ENCODE measurements at regions of chr2 and their contacts with region 1.

Region 1: GRCh38 chr2:230007931-230008707 is 60.6 kb downstream of the SLC16A14 start:
- DNase-seq: peak; percentile 92
- ATAC-seq: peak; percentile 69
- H3K4me3 Mint-ChIP-seq: no peak overlapping the region
- H3K27ac Mint-ChIP-seq: no peak overlapping the region
- H3K4me1 Mint-ChIP-seq: peaks cover 5% of the 10 kb centered on the region
- H3K27me3 Mint-ChIP-seq: no peaks in the 10 kb centered on the region

Region 2: DNA sequence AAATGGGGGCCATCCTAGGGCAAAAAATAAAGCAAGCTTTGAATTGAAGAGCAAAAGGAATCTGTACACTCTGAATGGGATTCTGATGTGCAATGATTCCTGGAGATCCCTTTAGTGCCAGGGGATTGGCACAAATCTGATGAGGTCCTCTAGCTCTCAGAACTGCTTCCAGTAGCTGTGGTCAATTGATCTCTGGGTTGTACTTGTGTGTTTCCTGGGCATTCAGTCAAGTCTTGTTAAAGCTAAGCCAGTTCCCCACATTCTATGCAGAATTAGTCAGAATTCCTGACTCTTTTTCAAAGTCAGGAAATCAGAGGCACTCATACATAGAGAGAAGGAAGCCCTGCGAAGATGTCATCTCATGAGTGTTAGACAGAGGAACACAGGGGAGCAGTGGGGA is 455.0 kb before region 1 on chr2:
- CTCF ChIA-PET with region 1: no interaction called
- POLR2A ChIA-PET with region 1: no interaction called
- intact Hi-C with region 1: no loop called
- DNase-seq: no peak
- ATAC-seq: no peak
- H3K4me3 Mint-ChIP-seq: no peak overlapping the region
- H3K27ac Mint-ChIP-seq: no peak overlapping the region
- H3K4me1 Mint-ChIP-seq: no peaks in the 10 kb centered on the region
- H3K27me3 Mint-ChIP-seq: peaks cover 10% of the 10 kb centered on the region

Region 3: DNA sequence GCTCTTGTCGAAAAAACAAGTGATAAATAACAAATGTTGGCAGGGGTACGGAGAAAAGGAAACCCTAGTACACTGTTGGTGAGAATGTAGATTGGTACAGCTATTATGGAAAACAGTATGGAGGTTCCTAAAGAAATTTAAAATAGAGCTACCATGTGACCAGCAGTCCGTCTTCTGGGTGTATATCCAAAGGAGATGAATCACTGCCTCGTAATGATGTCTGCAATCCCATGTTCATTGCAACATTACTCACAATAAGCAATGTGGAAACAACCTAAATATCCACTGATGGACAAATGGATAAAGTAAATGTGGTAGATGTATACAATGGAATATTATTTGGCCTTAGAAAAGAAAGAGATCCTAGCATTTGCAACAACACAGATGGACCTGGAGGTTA is 10.0 kb after region 1 on chr2:
- CTCF ChIA-PET with region 1: interaction called, 10 read pairs
- POLR2A ChIA-PET with region 1: no interaction called
- intact Hi-C with region 1: no loop called
- DNase-seq: no peak
- ATAC-seq: no peak
- H3K4me3 Mint-ChIP-seq: no peak overlapping the region
- H3K27ac Mint-ChIP-seq: no peak overlapping the region
- H3K4me1 Mint-ChIP-seq: no peaks in the 10 kb centered on the region
- H3K27me3 Mint-ChIP-seq: no peaks in the 10 kb centered on the region

Region 4: DNA sequence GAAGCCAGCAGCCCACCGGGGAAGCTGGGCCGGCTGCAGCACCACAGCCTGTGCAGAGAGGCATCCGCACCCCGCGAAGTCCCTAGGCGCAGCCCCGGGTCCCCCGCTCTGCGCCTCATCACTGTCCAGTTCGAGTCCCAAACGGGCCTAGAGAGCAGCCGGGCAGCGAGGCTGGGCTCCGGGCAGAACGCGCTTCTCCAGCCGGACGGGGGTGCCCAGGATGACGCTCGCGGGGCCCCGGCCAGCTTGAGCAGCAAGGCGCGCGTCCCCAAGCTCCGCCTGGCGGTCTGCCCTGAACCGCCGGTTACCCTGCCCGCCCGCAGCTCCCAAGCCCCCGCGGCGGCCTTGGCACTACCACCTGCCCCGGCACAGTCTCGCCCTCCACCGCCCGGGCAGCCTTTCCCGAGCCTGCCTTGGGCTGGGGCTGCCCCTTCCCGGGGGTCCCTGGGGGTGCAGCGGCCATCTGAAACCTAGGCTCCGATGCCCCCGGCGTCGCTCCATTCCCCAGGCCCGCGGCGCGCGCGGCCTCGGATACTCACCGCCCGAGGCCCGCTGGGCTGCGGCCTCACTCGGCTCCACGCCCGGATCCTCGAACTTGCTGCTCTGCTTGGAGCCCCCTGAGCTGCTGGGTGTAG is 60.0 kb after region 1 on chr2:
- CTCF ChIA-PET with region 1: interaction called, 26 read pairs
- POLR2A ChIA-PET with region 1: no interaction called
- intact Hi-C with region 1: loop called (anchors 1 kb)
- DNase-seq: peak; percentile 77
- ATAC-seq: peak; percentile 57
- H3K4me3 Mint-ChIP-seq: peak overlapping the region; percentile 72
- H3K27ac Mint-ChIP-seq: peak overlapping the region; percentile 79
- H3K4me1 Mint-ChIP-seq: peaks cover 17% of the 10 kb centered on the region
- H3K27me3 Mint-ChIP-seq: peaks cover 12% of the 10 kb centered on the region

Region 5: GRCh38 chr2:230085201-230085600 is 77.1 kb after region 1 on chr2:
- CTCF ChIA-PET with region 1: no interaction called
- POLR2A ChIA-PET with region 1: no interaction called
- intact Hi-C with region 1: no loop called
- DNase-seq: no peak
- ATAC-seq: no peak
- H3K4me3 Mint-ChIP-seq: no peak overlapping the region
- H3K27ac Mint-ChIP-seq: no peak overlapping the region
- H3K4me1 Mint-ChIP-seq: no peaks in the 10 kb centered on the region
- H3K27me3 Mint-ChIP-seq: peaks cover 2% of the 10 kb centered on the region

Region 6: GRCh38 chr2:230153390-230153976 is 145.4 kb after region 1 on chr2:
- CTCF ChIA-PET with region 1: interaction called, 71 read pairs
- POLR2A ChIA-PET with region 1: no interaction called
- intact Hi-C with region 1: no loop called
- DNase-seq: no peak
- ATAC-seq: no peak
- H3K4me3 Mint-ChIP-seq: no peak overlapping the region
- H3K27ac Mint-ChIP-seq: no peak overlapping the region
- H3K4me1 Mint-ChIP-seq: peaks cover 9% of the 10 kb centered on the region
- H3K27me3 Mint-ChIP-seq: no peaks in the 10 kb centered on the region

Region 7: DNA sequence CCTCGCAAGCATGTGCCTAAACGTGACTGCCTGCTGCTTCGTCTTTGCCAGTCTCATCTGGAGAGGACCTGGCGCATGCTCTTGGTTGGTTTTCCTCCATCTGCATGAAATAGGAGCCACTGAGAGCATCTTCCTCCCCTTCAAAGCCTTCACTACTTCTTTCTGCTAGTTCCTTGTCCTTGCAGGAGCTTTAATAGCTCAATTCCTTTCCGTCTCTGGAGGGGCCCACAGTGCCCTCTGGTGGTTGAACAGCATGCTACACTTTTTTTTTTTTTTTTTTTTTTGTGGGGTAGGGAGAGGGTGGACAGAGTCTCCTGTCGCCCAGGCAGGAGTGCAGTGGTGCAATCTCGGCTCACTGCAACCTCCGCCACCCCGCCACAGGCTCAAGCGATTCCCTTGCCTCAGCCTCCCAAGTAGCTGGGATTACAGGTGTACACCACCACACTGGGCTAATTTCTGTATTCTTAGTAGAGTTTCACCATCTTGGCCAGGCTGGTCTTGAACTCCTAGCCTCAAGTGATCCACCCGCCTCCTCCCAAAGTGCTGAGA is 152.1 kb after region 1 on chr2:
- CTCF ChIA-PET with region 1: interaction called, 71 read pairs
- POLR2A ChIA-PET with region 1: interaction called, 10 read pairs
- intact Hi-C with region 1: loop called (anchors 1 kb)
- DNase-seq: peak; percentile 72
- ATAC-seq: peak; percentile 59
- H3K4me3 Mint-ChIP-seq: no peak overlapping the region
- H3K27ac Mint-ChIP-seq: no peak overlapping the region
- H3K4me1 Mint-ChIP-seq: peaks cover 8% of the 10 kb centered on the region
- H3K27me3 Mint-ChIP-seq: no peaks in the 10 kb centered on the region